Right cardiac atrium (tissue), 5 donors: ENCODE measurements at regions of chr1 and their contacts with region 1.

Region 1: GRCh38 chr1:27097484-27097917 is 57.4 kb downstream of the SLC9A1 start:
- DNase-seq: peak; percentile 73 to 89 (median 85)
- ATAC-seq: peak; percentile 46 to 53
- H3K4me3 ChIP-seq: no peak overlapping the region
- H3K27ac ChIP-seq: no peak overlapping the region
- H3K4me1 ChIP-seq: peaks cover 11% of the 10 kb centered on the region
- H3K27me3 ChIP-seq: no peaks in the 10 kb centered on the region

Region 2: GRCh38 chr1:26913754-26914619 is 183.5 kb before region 1 on chr1 and contains the start of gene NR0B2:
- intact Hi-C with region 1: no loop called
- DNase-seq: peak; percentile 31 to 81 (median 73)
- ATAC-seq: peak; percentile 76 to 77
- H3K4me3 ChIP-seq: peak within 1 kb of the TSS; percentile 50
- H3K27ac ChIP-seq: peak within 1 kb of the TSS; percentile 95
- H3K4me1 ChIP-seq: no peaks in the 10 kb centered on the region
- H3K27me3 ChIP-seq: no peaks in the 10 kb centered on the region
- total RNA-seq, gene NR0B2: 4.2 to 9.6 (median 6.4) TPM

Region 3: GRCh38 chr1:26993237-26994019 is 104.1 kb before region 1 on chr1 and contains the start of gene TRNP1:
- intact Hi-C with region 1: loop called (anchors 5 to 10 kb)
- DNase-seq: peak; percentile 79 to 93 (median 91)
- ATAC-seq: peak; percentile 72 to 77
- H3K4me3 ChIP-seq: peak within 1 kb of the TSS; percentile 97
- H3K27ac ChIP-seq: peak within 1 kb of the TSS; percentile 21
- H3K4me1 ChIP-seq: peaks cover 3% of the 10 kb centered on the region
- H3K27me3 ChIP-seq: no peaks in the 10 kb centered on the region
- total RNA-seq, gene TRNP1: 45.9 to 52.4 (median 49.1) TPM

Region 4: DNA sequence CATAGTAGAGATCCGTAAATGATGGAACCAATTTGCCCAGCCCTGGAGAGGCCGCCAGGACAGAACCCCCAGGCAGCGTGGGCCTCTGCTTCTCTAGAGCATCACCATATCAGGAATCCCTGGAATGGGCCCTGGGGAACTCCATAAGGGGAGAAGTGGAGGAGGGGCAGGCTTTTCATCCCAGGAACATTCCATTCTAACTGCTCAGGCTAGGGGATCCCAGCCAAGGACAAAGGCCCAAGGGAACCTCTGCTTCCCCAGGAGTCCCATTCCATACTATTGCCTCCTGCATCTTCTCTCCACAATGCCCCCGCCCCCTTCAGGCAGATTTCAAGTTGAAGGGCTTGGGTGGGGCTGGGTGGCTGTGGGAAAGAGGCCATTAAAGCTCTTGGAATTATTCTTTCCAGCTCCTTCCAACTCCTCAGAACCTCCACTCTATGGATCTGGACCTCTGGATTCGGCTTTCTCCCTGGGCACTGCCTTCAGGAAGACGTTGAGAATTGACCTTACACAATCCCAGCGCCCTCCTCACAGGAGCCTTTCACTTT is 98.0 kb before region 1 on chr1:
- intact Hi-C with region 1: loop called (anchors 5 to 10 kb)
- DNase-seq: peak; percentile 74 to 87 (median 85)
- ATAC-seq: peak; percentile 70 to 73
- H3K4me3 ChIP-seq: no peak overlapping the region
- H3K27ac ChIP-seq: peak overlapping the region; percentile 94
- H3K4me1 ChIP-seq: peaks cover 20% of the 10 kb centered on the region
- H3K27me3 ChIP-seq: no peaks in the 10 kb centered on the region

Region 5: GRCh38 chr1:27044613-27045151 is 52.8 kb before region 1 on chr1:
- intact Hi-C with region 1: loop called (anchors 1 to 5 kb)
- DNase-seq: peak; percentile 86 to 95 (median 95)
- ATAC-seq: peak; percentile 89 to 90
- H3K4me3 ChIP-seq: no peak overlapping the region
- H3K27ac ChIP-seq: no peak overlapping the region
- H3K4me1 ChIP-seq: no peaks in the 10 kb centered on the region
- H3K27me3 ChIP-seq: no peaks in the 10 kb centered on the region

Region 6: GRCh38 chr1:27306892-27307761 is 209.6 kb after region 1 on chr1:
- intact Hi-C with region 1: no loop called
- DNase-seq: no peak
- ATAC-seq: peak; percentile 8 to 17
- H3K4me3 ChIP-seq: no peak overlapping the region
- H3K27ac ChIP-seq: no peak overlapping the region
- H3K4me1 ChIP-seq: no peaks in the 10 kb centered on the region
- H3K27me3 ChIP-seq: no peaks in the 10 kb centered on the region